PC-9 (cell line): ENCODE measurements at regions of chr7 and their contacts with region 1.

Region 1: DNA sequence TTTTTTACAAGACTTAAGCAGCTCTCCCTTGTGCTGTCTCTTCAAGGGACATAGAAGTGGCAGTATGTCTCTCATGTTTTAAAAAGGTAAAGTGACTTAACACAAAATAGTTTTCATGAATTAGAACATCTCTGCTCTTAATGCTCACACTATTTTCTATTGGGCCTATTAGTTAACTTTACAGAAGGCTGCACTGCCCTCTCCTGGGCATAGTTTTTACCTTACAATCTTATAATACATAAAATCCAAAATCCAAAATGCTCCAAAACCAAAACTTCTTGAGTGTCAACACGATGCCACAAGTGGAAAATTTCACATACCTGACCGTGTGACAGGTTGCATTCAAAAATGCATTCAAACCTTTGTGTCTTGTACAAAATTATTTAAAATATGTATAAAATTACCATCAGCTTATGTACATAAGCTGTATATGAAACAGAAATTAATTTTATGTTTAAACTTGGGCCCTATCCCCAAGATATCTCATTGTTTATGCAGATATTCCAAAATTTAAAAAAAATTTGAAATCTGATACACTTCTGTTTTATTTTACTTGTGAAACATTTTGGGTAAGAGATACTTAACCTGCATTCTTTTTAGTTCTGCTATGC is 25.8 kb downstream of the TES start:
- DNase-seq: no peak
- H3K4me3 ChIP-seq: no peak overlapping the region
- H3K27ac ChIP-seq: 0 out of 2 replicates have a peak overlapping the region, but pooled peaks have one; percentile 23
- H3K4me1 ChIP-seq: peaks cover 24% of the 10 kb centered on the region
- H3K27me3 ChIP-seq: no peaks in the 10 kb centered on the region
- CTCF ChIP-seq: peak; percentile 76

Region 2: GRCh38 chr7:116173051-116174028 is 62.8 kb before region 1 on chr7:
- CTCF ChIA-PET with region 1: interaction called, 4 read pairs
- POLR2A ChIA-PET with region 1: interaction called, 3 read pairs
- intact Hi-C with region 1: loop called (anchors 2 kb)
- DNase-seq: peak; percentile 26 to 48
- H3K4me3 ChIP-seq: no peak overlapping the region
- H3K27ac ChIP-seq: no peak overlapping the region
- H3K4me1 ChIP-seq: peaks cover 11% of the 10 kb centered on the region; the same call in 1 of the 2 replicates
- H3K27me3 ChIP-seq: no peaks in the 10 kb centered on the region
- CTCF ChIP-seq: peak; percentile 84

Region 3: DNA sequence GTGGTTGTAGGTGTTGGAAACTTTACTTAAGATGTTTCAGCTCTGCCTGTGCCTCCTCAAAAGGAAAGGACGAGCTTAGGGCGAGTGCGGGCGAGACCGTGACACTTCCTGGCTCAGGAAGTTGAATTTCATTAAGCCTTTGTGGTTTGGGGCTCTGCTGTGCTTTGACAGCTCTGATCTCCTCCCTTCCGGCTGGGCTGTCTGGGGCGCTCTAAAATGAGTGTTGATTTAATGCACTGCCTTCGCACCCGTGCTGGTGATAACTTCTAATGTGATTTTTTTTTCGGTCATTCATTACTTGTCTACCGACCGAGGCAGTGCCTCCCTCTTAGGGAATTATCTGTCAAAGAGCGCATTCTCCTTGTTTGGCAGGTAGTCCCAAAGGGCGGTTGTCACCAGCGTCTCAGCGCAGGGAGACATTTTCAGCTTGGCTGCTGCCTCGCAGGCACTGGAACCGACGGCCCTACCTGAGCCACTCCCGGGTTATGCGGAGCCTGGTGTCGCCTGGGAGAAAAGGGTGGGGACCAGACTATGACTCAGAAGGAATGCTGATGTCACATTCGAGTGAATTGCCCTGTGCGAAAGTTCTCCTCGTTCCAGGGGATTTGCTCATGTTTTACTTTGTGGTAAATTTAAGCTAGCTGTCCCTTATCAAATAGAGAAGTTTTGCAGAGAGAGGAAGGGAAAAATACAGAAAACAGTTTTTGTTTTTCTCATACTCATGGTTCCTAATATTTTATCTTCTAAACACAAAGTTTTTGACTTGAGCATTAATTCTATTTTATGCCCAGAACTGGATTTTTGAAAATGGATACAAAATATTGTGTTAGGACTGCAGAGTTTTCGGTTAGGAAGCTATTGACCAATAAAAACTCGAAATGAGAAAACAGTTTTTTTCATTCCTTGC is 24.9 kb before region 1 on chr7:
- CTCF ChIA-PET with region 1: interaction called, 5 read pairs
- POLR2A ChIA-PET with region 1: interaction called, 11 read pairs
- intact Hi-C with region 1: loop called (anchors 2 kb)
- DNase-seq: peak; percentile 92 to 93
- H3K4me3 ChIP-seq: peak overlapping the region; percentile 87
- H3K27ac ChIP-seq: peak overlapping the region; percentile 99
- H3K4me1 ChIP-seq: peaks cover 46% of the 10 kb centered on the region
- H3K27me3 ChIP-seq: no peaks in the 10 kb centered on the region
- CTCF ChIP-seq: no peak